Activated T-helper 2 cell treated with anti-CD3 and anti-CD28 coated beads, Interferon-gamma antibody, Interleukin-2, Interleukin-4, amounts not matched to agents 10 μg/mL and 5 μg/mL and 100 μg/mL, durations not matched to agents 14 hours and 24 hours and 36 hours (primary cell): ENCODE measurements at regions of chr16 and their contacts with region 1.

Region 1: GRCh38 chr16:53958341-53958880 is 254.5 kb downstream of the FTO start:
- DNase-seq: no peak
- H3K4me3 Mint-ChIP-seq: no peak overlapping the region
- H3K27ac Mint-ChIP-seq: no peak overlapping the region
- H3K4me1 Mint-ChIP-seq: peaks cover 20% of the 10 kb centered on the region
- H3K27me3 Mint-ChIP-seq: no peaks in the 10 kb centered on the region

Region 2: GRCh38 chr16:53988136-53988535 is 29.7 kb after region 1 on chr16:
- intact Hi-C with region 1: loop called (anchors 2 kb)
- DNase-seq: no peak
- H3K4me3 Mint-ChIP-seq: no peak overlapping the region
- H3K27ac Mint-ChIP-seq: no peak overlapping the region
- H3K4me1 Mint-ChIP-seq: peaks cover 11% of the 10 kb centered on the region
- H3K27me3 Mint-ChIP-seq: no peaks in the 10 kb centered on the region